ENCODE measurements at regions of chr2 and their contacts with region 1.

Region 1: DNA sequence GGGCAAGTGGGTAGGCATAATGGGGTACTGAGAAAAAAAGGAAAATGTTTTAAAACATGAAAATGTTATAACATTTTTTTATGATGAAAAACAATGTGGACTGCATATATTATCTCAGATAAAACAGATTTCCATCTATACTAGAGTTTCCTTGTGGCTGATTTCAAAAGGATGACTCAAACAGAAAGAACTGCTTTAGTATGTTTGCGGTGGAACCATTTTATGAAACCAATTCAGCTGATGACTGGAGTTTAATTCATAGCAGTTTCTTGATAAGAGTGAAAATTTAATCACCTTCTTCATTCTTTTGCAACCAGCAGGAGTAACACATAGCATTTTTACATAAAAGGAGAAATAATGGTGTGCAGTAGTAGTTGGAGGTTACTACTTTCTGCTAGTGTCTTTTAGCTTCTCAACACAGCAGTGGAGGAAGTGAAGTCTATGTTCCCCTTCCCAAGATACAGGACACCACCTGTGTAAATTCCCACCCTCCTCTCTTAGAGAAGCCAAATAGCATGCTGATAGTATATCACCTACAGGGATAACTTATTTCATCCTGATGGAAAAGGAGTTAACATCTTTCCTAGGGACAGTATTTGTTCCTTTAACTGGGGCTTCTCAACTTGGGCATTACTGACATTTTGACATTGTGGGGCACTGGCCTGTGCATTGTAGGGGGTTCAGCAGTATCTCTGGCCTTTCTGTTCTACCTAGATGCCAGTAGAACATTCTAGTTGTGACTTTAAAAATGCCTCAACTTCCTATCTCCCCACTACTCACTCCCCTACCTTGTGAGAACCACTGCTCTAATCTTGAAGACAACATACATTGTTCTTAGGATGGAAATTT is 29.9 kb downstream of the PELI1 start:
- DNase-seq: no peak
- ATAC-seq: peak; percentile 78
- H3K4me3 Mint-ChIP-seq: peak overlapping the region; percentile 9
- H3K27ac Mint-ChIP-seq: peak overlapping the region; percentile 91
- H3K4me1 Mint-ChIP-seq: peaks cover 77% of the 10 kb centered on the region
- H3K27me3 Mint-ChIP-seq: no peaks in the 10 kb centered on the region
- CTCF ChIP-seq: no peak

Region 2: GRCh38 chr2:64203858-64204632 is 89.8 kb after region 1 on chr2:
- CTCF ChIA-PET with region 1: no interaction called
- POLR2A ChIA-PET with region 1: no interaction called
- intact Hi-C with region 1: loop called (anchors 5 kb)
- DNase-seq: peak; percentile 63
- ATAC-seq: peak; percentile 46
- H3K4me3 Mint-ChIP-seq: peak overlapping the region; percentile 64
- H3K27ac Mint-ChIP-seq: peak overlapping the region; percentile 92
- H3K4me1 Mint-ChIP-seq: peaks cover 71% of the 10 kb centered on the region
- H3K27me3 Mint-ChIP-seq: no peaks in the 10 kb centered on the region
- CTCF ChIP-seq: no peak